ENCODE measurements at regions of chr2 and their contacts with region 1.

Region 1: DNA sequence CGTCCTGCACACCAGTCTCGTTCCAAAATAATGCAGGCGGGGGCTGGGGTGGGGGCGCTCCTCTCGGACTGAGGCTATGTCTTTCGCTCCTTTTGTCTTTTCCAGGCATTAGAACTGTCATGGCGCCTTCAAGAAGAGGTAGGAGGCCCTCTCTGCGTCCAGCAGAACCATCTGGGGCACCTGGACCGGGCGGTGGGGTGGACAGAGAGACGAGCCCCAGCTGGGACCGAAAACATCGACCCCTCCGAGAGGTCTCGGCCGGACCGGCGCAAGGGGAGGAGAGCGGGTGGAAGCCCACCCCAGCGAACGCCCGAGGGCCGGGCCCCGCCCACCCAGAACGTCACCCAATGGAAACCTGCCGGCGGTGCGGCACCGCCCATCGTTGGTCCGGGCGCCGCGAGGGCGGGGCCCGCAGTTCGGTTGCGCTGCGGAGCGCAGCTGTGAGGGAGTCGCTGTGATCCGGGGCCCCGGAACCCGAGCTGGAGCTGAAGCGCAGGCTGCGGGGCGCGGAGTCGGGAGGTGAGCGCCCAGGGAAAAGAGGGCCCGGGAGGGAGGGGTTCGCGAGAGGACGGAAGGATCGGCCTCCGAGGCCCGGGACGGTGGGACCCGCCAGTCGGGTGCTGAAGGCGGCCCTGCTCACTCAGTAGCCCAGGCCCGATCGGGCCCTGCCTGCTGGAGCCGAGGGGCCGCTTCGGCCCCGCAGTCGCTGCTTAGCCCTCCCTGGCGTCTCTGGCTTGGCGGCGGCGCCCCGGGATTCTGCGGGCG is at the start of gene NRBP1:
- DNase-seq: peak; percentile 93
- H3K4me3 Mint-ChIP-seq: peak within 1 kb of the TSS; percentile 97
- H3K27ac Mint-ChIP-seq: peak within 1 kb of the TSS; percentile 97
- H3K4me1 Mint-ChIP-seq: peaks cover 37% of the 10 kb centered on the region
- H3K27me3 Mint-ChIP-seq: no peaks in the 10 kb centered on the region
- total RNA-seq, gene NRBP1: 99.7 and 106 TPM in 2 replicates

Region 2: GRCh38 chr2:27071277-27071989 is 357.0 kb before region 1 on chr2 and contains the start of gene OST4:
- intact Hi-C with region 1: loop called (anchors 5 kb)
- DNase-seq: peak; percentile 91
- H3K4me3 Mint-ChIP-seq: peak within 1 kb of the TSS; percentile 99
- H3K27ac Mint-ChIP-seq: peak within 1 kb of the TSS; percentile 98
- H3K4me1 Mint-ChIP-seq: peaks cover 84% of the 10 kb centered on the region
- H3K27me3 Mint-ChIP-seq: peaks cover 2% of the 10 kb centered on the region
- total RNA-seq, gene OST4: 322 and 332 TPM in 2 replicates

Region 3: GRCh38 chr2:27095745-27096651 is 332.4 kb before region 1 on chr2:
- intact Hi-C with region 1: no loop called
- DNase-seq: peak; percentile 32
- H3K4me3 Mint-ChIP-seq: peak overlapping the region; percentile 37
- H3K27ac Mint-ChIP-seq: no peak overlapping the region
- H3K4me1 Mint-ChIP-seq: peaks cover 16% of the 10 kb centered on the region
- H3K27me3 Mint-ChIP-seq: no peaks in the 10 kb centered on the region

Region 4: GRCh38 chr2:27233341-27233740 is 195.1 kb before region 1 on chr2:
- intact Hi-C with region 1: no loop called
- DNase-seq: no peak
- H3K4me3 Mint-ChIP-seq: no peak overlapping the region
- H3K27ac Mint-ChIP-seq: no peak overlapping the region
- H3K4me1 Mint-ChIP-seq: no peaks in the 10 kb centered on the region
- H3K27me3 Mint-ChIP-seq: no peaks in the 10 kb centered on the region

Region 5: DNA sequence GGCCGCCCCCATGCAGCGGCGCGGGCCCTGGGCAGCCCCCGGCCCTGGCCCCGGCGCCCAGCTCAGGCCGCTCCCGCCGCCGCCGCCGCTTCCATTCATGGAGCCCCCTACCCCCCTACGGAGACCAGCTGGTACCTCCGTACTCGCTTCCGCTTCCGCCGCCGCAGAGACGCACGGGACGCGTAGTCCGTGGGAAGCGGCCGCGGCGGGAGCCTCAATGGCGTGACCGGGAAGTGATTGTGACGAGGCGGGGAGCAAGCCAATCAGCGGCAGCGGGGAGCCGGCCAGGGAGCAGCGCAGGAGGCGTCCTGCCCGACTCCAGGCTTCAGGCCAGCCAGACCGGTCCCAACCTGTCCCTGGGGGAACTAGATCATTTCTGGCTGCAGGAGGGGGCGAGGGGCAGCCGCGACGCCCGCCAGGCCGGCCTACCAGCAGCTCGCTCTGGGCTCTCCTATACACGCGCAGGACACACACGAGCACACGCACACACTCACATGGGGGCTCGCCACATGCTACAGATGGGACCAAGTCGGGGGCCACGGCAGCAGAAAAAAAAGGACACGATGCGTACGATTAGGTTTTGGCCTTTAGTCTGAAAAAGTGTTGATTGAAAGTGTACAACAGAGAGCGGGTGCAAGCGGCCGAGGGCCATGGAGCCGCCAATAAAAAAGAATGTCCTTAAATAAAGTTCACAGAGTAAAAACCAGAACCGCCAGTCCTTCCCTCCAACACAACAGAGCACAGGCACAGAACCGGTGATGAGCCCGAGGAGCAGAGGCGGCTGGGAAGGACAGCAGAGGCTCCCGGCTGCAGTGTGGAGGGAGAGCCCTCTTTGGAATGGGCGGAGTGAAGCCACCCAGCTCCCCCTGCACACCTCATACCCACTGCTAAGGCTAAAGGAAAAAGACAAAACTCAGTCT is 47.5 kb before region 1 on chr2 and contains the start of gene ZNF513:
- intact Hi-C with region 1: loop called (anchors 1 kb)
- DNase-seq: peak; percentile 87
- H3K4me3 Mint-ChIP-seq: peak within 1 kb of the TSS; percentile 92
- H3K27ac Mint-ChIP-seq: peak within 1 kb of the TSS; percentile 96
- H3K4me1 Mint-ChIP-seq: peaks cover 20% of the 10 kb centered on the region
- H3K27me3 Mint-ChIP-seq: no peaks in the 10 kb centered on the region
- total RNA-seq, gene ZNF513: 14.5 and 16.2 TPM in 2 replicates

Region 6: DNA sequence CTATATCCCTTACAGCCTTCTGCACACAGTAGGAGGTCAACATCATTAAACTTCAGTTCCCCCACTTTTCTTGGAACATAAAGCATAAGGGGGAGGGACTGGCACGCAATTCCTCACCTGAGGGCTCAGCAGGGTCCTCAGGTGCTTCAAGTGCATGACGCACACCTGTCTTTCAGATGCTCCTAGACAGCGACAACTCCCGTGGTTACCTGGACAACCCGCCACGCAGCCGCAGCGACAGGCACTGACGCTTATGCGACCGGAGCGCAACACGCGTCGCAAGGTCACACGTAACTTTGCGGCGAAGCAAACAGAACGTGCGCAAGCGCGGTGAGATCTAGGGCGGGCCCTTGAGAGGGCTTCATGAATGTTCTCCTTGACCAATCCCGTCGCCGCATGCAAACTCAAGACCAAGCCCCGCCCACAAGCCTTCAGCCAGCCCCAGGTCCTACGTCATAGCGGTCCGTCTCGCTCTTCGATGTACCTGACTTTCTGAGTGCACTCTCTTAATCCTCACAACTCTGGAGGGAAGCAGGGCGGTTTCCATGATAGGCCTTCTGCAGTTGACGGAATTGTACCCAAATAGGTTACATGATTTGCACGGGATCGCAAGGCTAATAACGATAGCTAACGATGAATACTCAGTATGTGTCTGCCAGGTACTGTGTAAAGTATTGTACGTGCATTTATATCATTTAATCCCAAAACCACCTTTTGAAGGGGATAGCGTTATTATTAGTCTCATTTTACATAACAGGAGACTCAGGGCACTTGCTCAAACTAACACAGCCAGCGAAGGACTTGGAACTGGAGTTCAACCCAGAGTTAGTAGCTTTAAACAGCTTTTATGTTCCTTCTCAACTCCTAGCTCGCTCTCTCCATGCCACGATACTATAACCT is 61.4 kb after region 1 on chr2 and contains the start of gene IFT172:
- intact Hi-C with region 1: loop called (anchors 1 kb)
- DNase-seq: peak; percentile 98
- H3K4me3 Mint-ChIP-seq: peak within 1 kb of the TSS; percentile 91
- H3K27ac Mint-ChIP-seq: peak within 1 kb of the TSS; percentile 91
- H3K4me1 Mint-ChIP-seq: peaks cover 22% of the 10 kb centered on the region
- H3K27me3 Mint-ChIP-seq: peaks cover 13% of the 10 kb centered on the region
- total RNA-seq, gene IFT172: 13.4 and 13.5 TPM in 2 replicates

Region 7: DNA sequence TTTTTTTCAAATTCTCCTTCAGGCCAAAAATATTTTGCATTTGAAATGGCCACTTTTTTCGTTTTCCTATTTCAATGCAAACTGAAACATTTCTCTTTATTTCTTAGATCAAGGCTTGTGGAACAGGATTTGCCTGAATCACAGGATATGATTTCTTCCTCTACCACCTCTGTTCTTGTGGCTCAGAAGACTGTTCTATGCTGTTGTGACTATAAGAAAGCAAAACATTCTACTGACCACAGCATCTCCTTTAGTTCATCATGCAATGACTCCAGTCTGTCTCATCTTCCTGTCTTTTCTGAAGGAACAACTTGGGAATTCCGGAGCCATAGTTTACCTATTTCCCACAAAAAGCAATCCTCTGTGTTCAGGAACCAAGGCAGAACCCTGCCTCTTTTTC is 138.2 kb after region 1 on chr2:
- intact Hi-C with region 1: no loop called
- DNase-seq: no peak
- H3K4me3 Mint-ChIP-seq: no peak overlapping the region
- H3K27ac Mint-ChIP-seq: no peak overlapping the region
- H3K4me1 Mint-ChIP-seq: no peaks in the 10 kb centered on the region
- H3K27me3 Mint-ChIP-seq: peaks cover 50% of the 10 kb centered on the region

Region 8: GRCh38 chr2:27628767-27629709 is 200.6 kb after region 1 on chr2 and contains the starts of genes CCDC121 and GPN1:
- intact Hi-C with region 1: loop called (anchors 1 kb)
- DNase-seq: peak; percentile 93
- H3K4me3 Mint-ChIP-seq: no peak within 1 kb of the TSS
- H3K27ac Mint-ChIP-seq: peak within 1 kb of the TSS; percentile 73
- H3K4me1 Mint-ChIP-seq: peaks cover 20% of the 10 kb centered on the region
- H3K27me3 Mint-ChIP-seq: no peaks in the 10 kb centered on the region
- total RNA-seq, gene CCDC121: 0.66 and 1.3 TPM in 2 replicates
- total RNA-seq, gene GPN1: 48.3 and 51.0 TPM in 2 replicates

Region 9: DNA sequence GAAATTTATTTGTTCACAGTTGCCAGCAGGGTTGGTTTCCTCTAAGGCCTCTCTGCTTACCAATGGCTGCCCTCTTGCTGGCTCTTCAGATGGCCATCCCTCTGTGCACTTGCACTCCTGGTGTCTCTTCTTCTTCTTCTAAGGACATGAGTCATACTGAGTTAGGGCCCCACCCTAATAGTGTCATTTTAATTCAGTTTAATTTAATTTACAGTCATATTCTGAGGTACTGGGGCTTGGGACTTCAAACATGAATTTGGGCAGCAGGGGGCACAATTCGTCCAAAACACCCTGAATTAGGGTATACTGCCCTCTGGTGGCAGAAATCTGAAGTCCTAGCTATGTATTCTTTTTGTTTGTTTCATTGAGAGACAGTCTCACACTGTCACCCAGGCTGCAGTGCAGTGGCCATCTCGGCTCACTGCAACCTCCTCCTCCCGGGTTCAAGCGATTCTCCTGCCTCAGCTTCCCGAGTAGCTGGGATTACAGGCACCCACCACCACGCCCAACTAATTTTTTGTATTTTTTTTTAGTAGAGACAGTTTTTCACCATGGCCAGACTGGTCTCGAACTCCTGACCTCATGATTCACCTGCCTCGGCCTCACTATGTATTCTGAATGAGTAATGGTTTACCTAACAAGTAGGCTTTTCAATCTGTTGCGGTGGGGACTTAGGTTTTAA is 255.1 kb after region 1 on chr2:
- intact Hi-C with region 1: loop called (anchors 1 kb)
- DNase-seq: peak; percentile 80
- H3K4me3 Mint-ChIP-seq: no peak overlapping the region
- H3K27ac Mint-ChIP-seq: peak overlapping the region; percentile 74
- H3K4me1 Mint-ChIP-seq: peaks cover 32% of the 10 kb centered on the region
- H3K27me3 Mint-ChIP-seq: no peaks in the 10 kb centered on the region